ENCODE measurements at regions of chr6 and their contacts with region 1.

Region 1: DNA sequence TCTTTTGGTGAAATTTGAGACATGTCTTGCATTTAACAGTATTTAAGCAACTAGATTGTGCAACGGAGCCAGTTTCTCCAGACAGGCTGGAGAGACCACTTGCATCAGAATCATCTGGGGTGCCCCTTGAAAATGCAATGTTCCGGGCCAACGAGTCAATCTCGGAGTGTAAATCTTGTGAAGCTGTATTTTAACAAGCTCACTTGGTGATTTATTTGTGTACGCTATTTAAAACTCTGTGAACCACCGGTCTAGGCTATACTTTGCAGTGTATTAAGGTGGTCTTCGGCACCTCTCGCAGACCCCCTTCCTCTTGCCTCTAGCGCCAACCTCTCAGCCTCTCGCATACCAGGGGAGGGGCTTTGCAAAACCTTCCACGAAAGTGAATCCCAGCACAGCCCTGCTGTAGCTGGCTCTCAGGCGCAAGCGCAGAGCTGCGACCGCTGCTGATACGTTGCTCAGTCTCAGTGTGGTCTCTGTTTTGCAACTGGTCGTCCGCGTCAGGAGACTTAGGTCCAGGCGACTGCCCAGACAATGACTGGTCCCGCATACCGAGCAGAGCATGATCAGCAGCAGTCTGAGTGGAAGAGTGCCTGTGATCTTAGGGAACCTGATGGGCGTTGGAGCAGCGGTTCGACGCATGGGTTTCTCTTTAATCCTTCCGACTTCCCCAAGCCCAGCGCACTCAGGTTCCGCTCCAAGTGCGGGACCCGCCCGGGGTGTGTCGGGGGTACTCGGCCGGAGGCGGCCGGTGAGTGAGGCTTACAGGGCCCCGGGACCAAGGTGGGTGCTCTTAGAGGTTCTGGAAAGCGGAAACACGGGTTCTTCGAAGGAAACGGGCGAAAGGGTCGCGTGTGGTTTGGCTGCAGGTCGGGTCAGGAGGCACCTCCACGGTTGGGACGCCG is at the start of gene ZNF391:
- DNase-seq: peak; percentile 50
- H3K4me3 Mint-ChIP-seq: peak within 1 kb of the TSS; percentile 90
- H3K27ac Mint-ChIP-seq: peak within 1 kb of the TSS; percentile 66
- H3K4me1 Mint-ChIP-seq: peaks cover 19% of the 10 kb centered on the region
- H3K27me3 Mint-ChIP-seq: peaks cover 7% of the 10 kb centered on the region
- total RNA-seq, gene ZNF391: 0.37 and 0.44 TPM in 2 replicates

Region 2: GRCh38 chr6:27374824-27375612 is 13.5 kb before region 1 on chr6:
- intact Hi-C with region 1: loop called (anchors 1 kb)
- DNase-seq: peak; percentile 43
- H3K4me3 Mint-ChIP-seq: peak overlapping the region; percentile 78
- H3K27ac Mint-ChIP-seq: no peak overlapping the region
- H3K4me1 Mint-ChIP-seq: peaks cover 20% of the 10 kb centered on the region
- H3K27me3 Mint-ChIP-seq: no peaks in the 10 kb centered on the region

Measured in activated T-helper 1 cell treated with anti-CD3 and anti-CD28 coated beads, Interleukin-12 subunit alpha, Interleukin-12 subunit beta, Interleukin-2, Interleukin-4 antibody, amounts not matched to agents 30 ng/mL and 10 ng/mL and 1 ng/mL, durations not matched to agents 14 hours and 24 hours and 36 hours (primary cell).